HCT116 (cell line): ENCODE measurements at regions of chr15 and their contacts with region 1.

Region 1: DNA sequence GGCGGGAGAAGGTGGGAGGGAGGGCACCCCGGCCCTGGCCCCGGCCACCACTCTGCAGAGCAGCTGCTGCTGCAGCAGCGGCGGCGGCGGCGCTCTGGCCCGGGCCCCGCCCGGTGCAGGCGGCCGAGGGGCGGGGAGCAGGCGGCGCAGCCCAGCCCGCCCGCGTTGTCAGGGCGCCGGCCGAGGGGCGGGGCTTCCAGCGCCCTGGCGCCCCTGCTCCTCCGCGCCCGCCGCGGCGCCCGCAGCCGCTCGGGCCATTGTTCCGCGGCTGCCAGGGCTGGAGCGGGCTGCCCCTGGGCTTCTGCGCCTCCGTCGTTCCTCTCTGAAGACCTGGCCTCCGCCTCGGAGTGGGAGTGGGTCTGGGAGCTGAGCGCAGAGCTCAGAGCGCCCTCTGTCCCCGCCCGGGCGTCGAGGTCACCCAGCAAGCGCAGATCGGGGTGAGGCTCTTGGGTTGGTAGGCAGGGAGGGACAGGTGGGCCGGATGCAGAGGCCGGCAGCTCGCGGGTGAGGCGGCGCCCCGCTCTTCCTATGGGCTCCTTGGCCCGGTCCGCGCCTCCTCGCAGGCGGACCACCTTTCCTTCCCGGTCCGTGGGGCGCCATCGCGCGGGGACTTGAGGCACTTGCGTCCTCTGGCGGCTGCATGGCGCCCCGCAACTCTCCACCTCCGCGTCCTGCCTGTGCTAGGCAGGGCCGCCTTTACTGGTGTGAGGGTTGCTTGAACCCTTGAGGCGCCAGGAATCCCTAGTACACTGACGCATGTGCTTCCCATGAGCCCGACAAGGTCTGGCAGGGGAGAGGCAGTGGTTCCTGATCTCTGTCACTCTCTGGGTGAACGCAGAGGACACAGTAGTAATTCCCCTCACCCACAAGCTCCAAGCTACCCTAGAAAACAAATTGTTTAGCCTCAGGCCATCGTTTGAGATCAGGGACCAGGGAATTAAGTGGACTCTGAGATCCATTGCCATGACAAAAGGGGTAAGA is at the start of gene LPCAT4:
- DNase-seq: peak; percentile 69
- ATAC-seq: peak; percentile 87
- H3K4me3 ChIP-seq: peak within 1 kb of the TSS; percentile 88 to 98
- H3K27ac ChIP-seq: peak within 1 kb of the TSS; percentile 96
- H3K4me1 ChIP-seq: peaks cover 15 to 28% of the 10 kb centered on the region in 2 experiments
- H3K27me3 ChIP-seq: no peaks in the 10 kb centered on the region
- CTCF ChIP-seq: peak; percentile 88 to 95 (median 93)
- POLR2A ChIP-seq: peak; percentile 88
- RAD21 ChIP-seq: peak; percentile 81
- total RNA-seq, gene LPCAT4: 77.1 TPM

Region 2: GRCh38 chr15:34065941-34066340 is 301.4 kb before region 1 on chr15:
- CTCF ChIA-PET with region 1: interaction called, 4 read pairs
- POLR2A ChIA-PET with region 1: no interaction called
- RAD21 ChIA-PET with region 1: no interaction called
- intact Hi-C with region 1: loop called (anchors 10 kb)
- DNase-seq: no peak
- ATAC-seq: no peak
- H3K4me3 ChIP-seq: no peak overlapping the region
- H3K27ac ChIP-seq: no peak overlapping the region
- H3K4me1 ChIP-seq: no peaks in the 10 kb centered on the region
- H3K27me3 ChIP-seq: no peaks in the 10 kb centered on the region
- CTCF ChIP-seq: no peak
- POLR2A ChIP-seq: no peak
- RAD21 ChIP-seq: no peak

Region 3: GRCh38 chr15:34109797-34110663 is 257.4 kb before region 1 on chr15:
- CTCF ChIA-PET with region 1: interaction called, 12 read pairs
- POLR2A ChIA-PET with region 1: no interaction called
- RAD21 ChIA-PET with region 1: interaction called in 1 of 2 experiments, 4 read pairs
- intact Hi-C with region 1: loop called (anchors 1 kb)
- DNase-seq: peak; percentile 29
- ATAC-seq: peak; percentile 72; the same call in 1 of the 2 replicates
- H3K4me3 ChIP-seq: no peak overlapping the region
- H3K27ac ChIP-seq: no peak overlapping the region
- H3K4me1 ChIP-seq: peaks cover 0 to 3% of the 10 kb centered on the region in 2 experiments; a peak in 1 of 4 replicates
- H3K27me3 ChIP-seq: no peaks in the 10 kb centered on the region
- CTCF ChIP-seq: peak; percentile 74 to 88 (median 78)
- POLR2A ChIP-seq: no peak
- RAD21 ChIP-seq: peak; percentile 82

Region 4: GRCh38 chr15:34223904-34224596 is 143.3 kb before region 1 on chr15:
- CTCF ChIA-PET with region 1: no interaction called
- POLR2A ChIA-PET with region 1: no interaction called
- RAD21 ChIA-PET with region 1: no interaction called
- intact Hi-C with region 1: loop called (anchors 10 kb)
- DNase-seq: no peak
- ATAC-seq: no peak
- H3K4me3 ChIP-seq: peak overlapping the region; percentile 76 to 100
- H3K27ac ChIP-seq: peak overlapping the region; percentile 95
- H3K4me1 ChIP-seq: peaks cover 12 to 15% of the 10 kb centered on the region in 2 experiments; a peak in 3 of 4 replicates
- H3K27me3 ChIP-seq: no peaks in the 10 kb centered on the region
- CTCF ChIP-seq: no peak
- POLR2A ChIP-seq: no peak
- RAD21 ChIP-seq: no peak

Region 5: GRCh38 chr15:34275154-34275553 is 92.2 kb before region 1 on chr15:
- CTCF ChIA-PET with region 1: no interaction called
- POLR2A ChIA-PET with region 1: no interaction called
- RAD21 ChIA-PET with region 1: no interaction called
- intact Hi-C with region 1: no loop called
- DNase-seq: no peak
- ATAC-seq: no peak
- H3K4me3 ChIP-seq: no peak overlapping the region
- H3K27ac ChIP-seq: no peak overlapping the region
- H3K4me1 ChIP-seq: no peaks in the 10 kb centered on the region
- H3K27me3 ChIP-seq: no peaks in the 10 kb centered on the region
- CTCF ChIP-seq: no peak
- POLR2A ChIP-seq: no peak
- RAD21 ChIP-seq: no peak

Region 6: DNA sequence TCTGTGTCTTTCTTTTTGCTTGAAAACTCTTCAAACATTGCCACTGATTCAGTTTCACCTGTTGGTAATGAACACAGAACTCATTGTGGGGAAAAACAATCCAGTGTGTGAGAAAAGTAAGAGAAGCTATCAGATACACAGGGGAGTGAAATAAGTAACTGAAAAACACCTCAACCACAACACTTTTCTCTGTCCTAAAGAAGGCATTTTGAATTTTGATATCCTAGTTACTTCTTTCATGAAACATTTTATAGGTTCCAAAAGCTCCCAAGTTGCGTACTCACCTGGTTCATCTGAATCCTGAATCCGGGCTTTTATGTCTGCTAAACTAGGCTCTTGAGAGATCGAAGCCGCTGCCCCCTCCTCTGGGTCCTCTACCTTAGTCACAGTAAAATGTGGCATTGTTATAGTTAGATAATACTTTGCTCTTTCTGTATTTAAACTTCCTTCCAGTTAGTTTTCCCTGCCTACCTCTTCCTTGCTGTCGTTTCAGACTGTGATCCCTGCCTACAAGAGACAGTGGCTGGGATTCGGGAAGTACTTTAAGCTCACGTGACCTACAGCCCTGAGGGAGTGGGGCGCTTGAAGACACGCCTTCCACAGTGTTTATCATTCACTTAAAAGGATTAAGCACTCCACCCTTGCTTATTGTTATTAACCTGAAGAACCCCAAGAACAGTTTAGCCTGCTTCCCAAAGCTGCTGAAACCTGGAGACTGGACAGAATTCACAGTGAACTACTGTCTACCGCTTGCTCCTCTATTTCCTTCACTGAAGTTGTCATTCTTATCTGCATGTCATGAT is 48.9 kb before region 1 on chr15:
- CTCF ChIA-PET with region 1: no interaction called
- POLR2A ChIA-PET with region 1: no interaction called
- RAD21 ChIA-PET with region 1: no interaction called
- intact Hi-C with region 1: loop called (anchors 10 kb)
- DNase-seq: peak; percentile 50
- ATAC-seq: peak; percentile 94
- H3K4me3 ChIP-seq: peak overlapping the region; percentile 58 to 61
- H3K27ac ChIP-seq: no peak overlapping the region; the same call in 1 of the 2 replicates
- H3K4me1 ChIP-seq: peaks cover 26 to 43% of the 10 kb centered on the region in 2 experiments
- H3K27me3 ChIP-seq: no peaks in the 10 kb centered on the region
- CTCF ChIP-seq: no peak
- POLR2A ChIP-seq: no peak
- RAD21 ChIP-seq: no peak

Region 7: DNA sequence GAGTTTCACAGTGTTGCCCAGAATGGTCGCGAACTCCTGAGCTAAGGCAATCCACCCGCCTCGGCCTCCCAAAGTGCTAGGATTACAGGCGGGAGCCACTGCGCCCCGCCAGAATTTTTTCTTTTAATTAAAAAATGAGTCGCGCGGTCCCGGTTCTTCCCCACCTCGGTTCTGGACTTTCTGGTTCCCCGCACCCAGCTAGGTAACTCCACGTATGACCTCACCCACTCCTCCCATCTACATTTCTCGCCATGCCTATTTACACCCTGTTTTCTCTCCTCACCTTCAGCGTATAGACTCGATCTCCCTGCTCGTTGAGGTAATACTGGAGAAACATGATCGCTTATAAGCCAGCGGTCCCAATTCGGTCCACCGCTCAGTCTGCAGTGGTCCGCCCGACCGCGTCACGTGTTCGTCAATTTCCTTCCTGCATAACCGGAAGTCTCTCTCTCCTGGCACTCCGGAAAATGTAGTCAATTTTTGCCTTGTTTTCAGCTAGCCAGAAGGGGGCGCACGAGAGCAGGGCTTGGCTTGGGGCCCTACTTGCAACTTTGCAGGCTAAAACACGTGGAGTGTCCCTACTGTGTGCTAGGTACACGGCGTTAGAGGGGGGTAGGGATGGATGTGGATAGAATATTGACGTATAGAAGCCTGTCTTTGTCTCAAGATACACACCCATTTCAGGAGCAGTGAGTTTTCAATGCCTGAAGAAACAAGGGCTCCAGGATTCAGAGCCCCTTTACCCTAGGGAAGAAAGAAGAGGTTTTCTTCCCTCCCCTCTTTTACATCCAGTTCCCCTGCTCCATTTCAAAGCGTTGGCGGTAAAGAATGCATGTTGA is 24.4 kb before region 1 on chr15 and contains the starts of genes NOP10 and NUTM1:
- CTCF ChIA-PET with region 1: interaction called, 11 read pairs
- POLR2A ChIA-PET with region 1: interaction called, 5 read pairs
- RAD21 ChIA-PET with region 1: interaction called, 3 to 4 read pairs
- intact Hi-C with region 1: no loop called
- DNase-seq: peak; percentile 90
- ATAC-seq: peak; percentile 82
- H3K4me3 ChIP-seq: peak within 1 kb of the TSS; percentile 79 to 96
- H3K27ac ChIP-seq: peak within 1 kb of the TSS; percentile 72
- H3K4me1 ChIP-seq: peaks cover 7 to 25% of the 10 kb centered on the region in 2 experiments; a peak in 3 of 4 replicates
- H3K27me3 ChIP-seq: no peaks in the 10 kb centered on the region
- CTCF ChIP-seq: peak; percentile 80 to 90 (median 80)
- POLR2A ChIP-seq: peak; percentile 96
- RAD21 ChIP-seq: peak; percentile 80
- total RNA-seq, gene NOP10: 216 TPM
- total RNA-seq, gene NUTM1: 0.07 TPM